GM12878 (cell line): ENCODE measurements at regions of chr22 and their contacts with region 1.

Region 1: DNA sequence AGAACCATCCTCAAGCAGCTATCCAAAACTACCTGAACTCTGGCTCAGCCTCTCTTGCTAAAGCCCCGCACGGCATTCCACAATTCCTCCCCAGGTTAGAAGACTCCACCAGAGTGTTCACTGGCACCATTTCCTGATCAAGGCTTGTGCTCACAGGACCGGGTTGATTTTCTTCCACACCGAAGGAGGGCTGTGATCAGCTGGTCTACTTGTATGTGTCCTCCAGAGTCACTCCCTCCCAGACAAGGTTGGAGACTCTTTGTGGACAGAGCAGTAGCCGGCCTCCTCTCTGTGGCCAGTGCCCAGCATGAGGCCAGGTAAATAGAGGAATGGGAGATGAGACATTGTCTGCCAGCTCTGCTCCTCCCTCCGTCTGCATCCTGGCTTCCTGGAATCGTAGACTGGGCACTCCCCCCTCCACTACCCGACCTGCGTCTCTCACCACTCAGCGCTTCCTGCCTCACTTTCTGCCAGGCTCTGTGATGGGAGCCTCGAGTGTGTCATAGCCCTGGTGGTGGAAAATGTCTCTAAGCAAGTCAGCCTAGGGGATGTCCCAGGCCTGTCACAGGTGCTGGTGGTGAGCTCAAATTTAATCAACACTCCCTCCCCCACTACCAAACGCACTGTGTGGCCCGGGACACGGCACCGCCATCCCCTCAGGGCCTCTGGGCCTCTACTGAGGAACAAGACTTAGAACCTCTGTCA is 12.5 kb upstream of the TMPRSS6 start:
- DNase-seq: peak; percentile 73
- ATAC-seq: peak; percentile 95
- H3K4me3 ChIP-seq: no peak overlapping the region
- H3K27ac ChIP-seq: peak overlapping the region; percentile 38
- H3K4me1 ChIP-seq: peaks cover 21% of the 10 kb centered on the region
- H3K27me3 ChIP-seq: no peaks in the 10 kb centered on the region
- CTCF ChIP-seq: peak in 2 of 3 experiments; percentile 9 to 16; a peak in 1 of 6 replicates
- EP300 ChIP-seq: no peak; a peak in 1 of 4 replicates
- POLR2A ChIP-seq: peak; percentile 74
- RAD21 ChIP-seq: 0 out of 2 replicates have a peak, but pooled peaks have one; percentile 24

Region 2: GRCh38 chr22:37088108-37088605 is 33.9 kb before region 1 on chr22:
- CTCF ChIA-PET with region 1: no interaction called
- POLR2A ChIA-PET with region 1: no interaction called
- RAD21 ChIA-PET with region 1: interaction called, 15 read pairs
- SMC1A ChIA-PET with region 1: interaction called, 5 read pairs
- in situ Hi-C with region 1: no loop called
- intact Hi-C with region 1: no loop called
- DNase-seq: no peak
- ATAC-seq: peak; percentile 33; the same call in 2 of the 3 replicates
- H3K4me3 ChIP-seq: no peak overlapping the region
- H3K27ac ChIP-seq: no peak overlapping the region
- H3K4me1 ChIP-seq: peaks cover 10% of the 10 kb centered on the region
- H3K27me3 ChIP-seq: no peaks in the 10 kb centered on the region
- CTCF ChIP-seq: no peak
- EP300 ChIP-seq: no peak
- POLR2A ChIP-seq: no peak
- RAD21 ChIP-seq: no peak

Region 3: DNA sequence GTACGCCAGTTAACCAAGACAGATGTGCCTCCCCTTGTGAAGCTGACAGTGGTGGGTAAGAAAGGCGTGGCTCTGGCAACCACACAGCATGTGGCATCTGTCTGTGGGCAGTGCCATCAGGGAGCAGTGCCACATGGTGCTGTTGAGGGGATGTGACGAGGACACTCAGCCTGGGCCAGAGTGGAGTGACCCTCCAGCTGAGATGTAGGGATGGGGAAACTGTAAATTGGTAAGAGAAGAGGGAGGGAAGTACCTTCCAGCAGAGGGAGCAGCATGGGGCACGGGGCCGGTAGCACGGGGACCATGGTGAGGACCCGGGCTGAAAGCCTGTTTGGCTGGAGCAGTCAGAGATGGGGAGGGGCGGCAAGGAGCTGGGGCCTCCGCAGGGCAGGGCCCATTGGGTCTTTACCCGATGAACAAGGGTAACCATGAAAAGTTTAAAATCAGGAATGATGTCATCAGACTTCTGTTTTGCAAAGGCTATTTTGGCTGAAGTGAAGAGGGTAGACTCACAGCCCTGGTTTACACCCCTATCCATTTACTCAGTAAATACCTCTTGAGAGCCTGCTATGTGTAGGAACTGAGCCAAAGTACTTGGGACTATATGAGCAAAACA is 23.0 kb before region 1 on chr22:
- CTCF ChIA-PET with region 1: interaction called, 4 read pairs
- POLR2A ChIA-PET with region 1: interaction called, 3 read pairs
- RAD21 ChIA-PET with region 1: interaction called, 12 read pairs
- SMC1A ChIA-PET with region 1: interaction called, 10 read pairs
- in situ Hi-C with region 1: no loop called
- intact Hi-C with region 1: no loop called
- DNase-seq: no peak
- ATAC-seq: peak; percentile 54
- H3K4me3 ChIP-seq: no peak overlapping the region
- H3K27ac ChIP-seq: no peak overlapping the region
- H3K4me1 ChIP-seq: peaks cover 6% of the 10 kb centered on the region; the same call in 1 of the 2 replicates
- H3K27me3 ChIP-seq: peaks cover 1 to 5% of the 10 kb centered on the region in 2 experiments; a peak in 3 of 4 replicates
- CTCF ChIP-seq: peak; percentile 35 to 38 (median 38); a peak in 5 of 6 replicates
- EP300 ChIP-seq: no peak
- POLR2A ChIP-seq: no peak
- RAD21 ChIP-seq: peak; percentile 39; the same call in 1 of the 2 replicates

Region 4: DNA sequence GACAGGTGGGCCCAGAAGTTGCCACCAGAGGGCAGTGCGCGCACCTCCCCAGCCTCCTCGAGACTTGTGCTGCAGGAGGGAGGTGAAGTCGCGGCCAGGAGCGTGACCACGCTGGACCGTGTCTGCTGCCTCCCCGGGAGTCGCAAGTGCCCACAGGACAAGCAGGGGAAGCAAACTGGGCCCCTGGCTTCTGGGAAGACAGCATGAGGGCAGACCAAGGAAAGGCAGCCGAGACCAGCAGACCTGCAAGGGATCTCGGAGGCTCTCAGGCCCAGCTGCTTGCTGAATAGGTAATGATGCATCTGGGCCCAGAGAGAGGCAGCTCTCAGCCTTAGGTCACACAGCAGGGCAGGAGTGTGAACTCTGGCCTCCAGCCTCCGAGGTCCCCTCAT is 44.6 kb after region 1 on chr22:
- CTCF ChIA-PET with region 1: interaction called, 13 read pairs
- POLR2A ChIA-PET with region 1: interaction called, 14 read pairs
- RAD21 ChIA-PET with region 1: interaction called, 12 read pairs
- SMC1A ChIA-PET with region 1: interaction called, 29 read pairs
- in situ Hi-C with region 1: no loop called
- intact Hi-C with region 1: no loop called
- DNase-seq: no peak
- ATAC-seq: peak; percentile 21
- H3K4me3 ChIP-seq: no peak overlapping the region; the same call in 1 of the 2 replicates
- H3K27ac ChIP-seq: no peak overlapping the region; the same call in 1 of the 2 replicates
- H3K4me1 ChIP-seq: peaks cover 62% of the 10 kb centered on the region
- H3K27me3 ChIP-seq: no peaks in the 10 kb centered on the region
- CTCF ChIP-seq: peak in 2 of 3 experiments; percentile 87 to 92; a peak in 5 of 6 replicates
- EP300 ChIP-seq: no peak
- POLR2A ChIP-seq: no peak
- RAD21 ChIP-seq: peak; percentile 77

Region 5: DNA sequence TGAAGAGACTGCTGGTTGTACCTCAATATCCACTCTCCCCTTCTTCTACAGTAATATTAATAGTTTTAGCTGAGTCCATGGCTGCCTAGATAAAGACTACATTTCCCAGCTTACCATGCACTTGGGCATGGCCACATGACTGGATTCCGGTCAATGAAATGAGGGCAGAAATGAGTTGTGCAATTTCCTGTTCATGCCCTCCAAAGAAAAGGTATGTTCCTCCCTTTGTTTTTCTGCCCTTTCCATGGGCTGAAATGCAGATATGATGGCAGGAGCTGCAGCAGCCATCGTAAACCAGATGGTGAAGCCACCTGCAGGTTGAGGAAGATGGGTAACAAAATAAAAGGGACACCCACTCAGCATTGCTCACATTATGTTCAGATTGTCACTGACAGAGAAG is 320.5 kb after region 1 on chr22:
- CTCF ChIA-PET with region 1: no interaction called
- POLR2A ChIA-PET with region 1: no interaction called
- RAD21 ChIA-PET with region 1: no interaction called
- SMC1A ChIA-PET with region 1: no interaction called
- in situ Hi-C with region 1: no loop called
- intact Hi-C with region 1: no loop called
- DNase-seq: no peak
- ATAC-seq: peak; percentile 73
- H3K4me3 ChIP-seq: no peak overlapping the region
- H3K27ac ChIP-seq: no peak overlapping the region
- H3K4me1 ChIP-seq: no peaks in the 10 kb centered on the region
- H3K27me3 ChIP-seq: no peaks in the 10 kb centered on the region; a peak in 3 of 4 replicates
- CTCF ChIP-seq: no peak
- EP300 ChIP-seq: no peak
- POLR2A ChIP-seq: no peak
- RAD21 ChIP-seq: no peak